ENCODE measurements at regions of chr14 and their contacts with region 1.

Region 1: GRCh38 chr14:104723648-104724406 is at the start of gene ADSS1:
- DNase-seq: no peak
- ATAC-seq: peak; percentile 81
- H3K4me3 ChIP-seq: peak within 1 kb of the TSS; percentile 94
- H3K27ac ChIP-seq: peak within 1 kb of the TSS; percentile 27; the same call in 1 of the 2 replicates
- H3K4me1 ChIP-seq: peaks cover 23% of the 10 kb centered on the region
- H3K27me3 ChIP-seq: no peaks in the 10 kb centered on the region; the same call in 1 of the 2 replicates
- CTCF ChIP-seq: peak; percentile 64
- POLR2A ChIP-seq: no peak
- RAD21 ChIP-seq: peak; percentile 24; the same call in 1 of the 2 replicates
- total RNA-seq, gene ADSS1: 1.8 and 2.5 TPM in 2 replicates

Region 2: DNA sequence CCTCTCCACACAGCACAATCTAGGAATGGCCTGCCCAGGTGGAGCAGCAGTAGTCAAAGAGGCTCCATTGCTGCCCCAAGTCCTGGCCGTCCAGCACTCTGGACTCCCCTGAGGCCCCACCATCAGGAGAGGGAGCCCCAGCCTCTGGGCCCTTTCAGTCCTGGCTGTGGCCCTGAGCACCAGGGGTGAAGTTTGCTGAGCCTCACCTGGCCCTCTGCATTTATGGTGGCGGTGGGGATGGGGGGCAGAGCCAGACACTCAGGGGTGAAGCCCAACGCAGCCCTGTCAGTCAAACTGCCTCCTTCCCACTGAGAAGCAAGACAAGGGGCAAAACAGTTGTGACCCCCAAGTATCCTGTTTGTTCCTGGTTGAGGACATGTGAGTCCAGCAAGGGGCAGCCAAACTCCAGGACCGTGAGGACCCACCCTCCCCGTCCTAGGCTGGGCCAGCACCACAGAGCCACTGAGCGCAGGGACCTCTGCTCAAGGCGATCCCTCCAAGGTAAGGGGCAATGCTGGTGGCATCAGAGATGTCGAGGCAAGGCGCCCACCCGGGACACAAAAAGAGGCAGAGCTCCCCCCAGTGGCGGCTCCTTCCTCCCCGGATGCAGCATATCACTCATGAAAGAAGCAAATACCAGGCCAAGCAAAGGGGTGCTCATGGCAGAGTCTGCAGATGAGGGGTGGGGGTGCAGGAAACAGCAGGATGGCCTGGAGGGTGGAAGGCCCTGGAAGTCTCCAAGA is 1806.2 kb before region 1 on chr14:
- CTCF ChIA-PET with region 1: no interaction called
- POLR2A ChIA-PET with region 1: no interaction called
- dilution Hi-C with region 1: no loop called
- in situ Hi-C with region 1: no loop called
- intact Hi-C with region 1: no loop called
- DNase-seq: peak; percentile 24
- ATAC-seq: peak; percentile 74
- H3K4me3 ChIP-seq: no peak overlapping the region
- H3K27ac ChIP-seq: no peak overlapping the region
- H3K4me1 ChIP-seq: no peaks in the 10 kb centered on the region
- H3K27me3 ChIP-seq: peaks cover 9% of the 10 kb centered on the region
- CTCF ChIP-seq: peak; percentile 72
- POLR2A ChIP-seq: no peak
- RAD21 ChIP-seq: peak; percentile 74

Region 3: DNA sequence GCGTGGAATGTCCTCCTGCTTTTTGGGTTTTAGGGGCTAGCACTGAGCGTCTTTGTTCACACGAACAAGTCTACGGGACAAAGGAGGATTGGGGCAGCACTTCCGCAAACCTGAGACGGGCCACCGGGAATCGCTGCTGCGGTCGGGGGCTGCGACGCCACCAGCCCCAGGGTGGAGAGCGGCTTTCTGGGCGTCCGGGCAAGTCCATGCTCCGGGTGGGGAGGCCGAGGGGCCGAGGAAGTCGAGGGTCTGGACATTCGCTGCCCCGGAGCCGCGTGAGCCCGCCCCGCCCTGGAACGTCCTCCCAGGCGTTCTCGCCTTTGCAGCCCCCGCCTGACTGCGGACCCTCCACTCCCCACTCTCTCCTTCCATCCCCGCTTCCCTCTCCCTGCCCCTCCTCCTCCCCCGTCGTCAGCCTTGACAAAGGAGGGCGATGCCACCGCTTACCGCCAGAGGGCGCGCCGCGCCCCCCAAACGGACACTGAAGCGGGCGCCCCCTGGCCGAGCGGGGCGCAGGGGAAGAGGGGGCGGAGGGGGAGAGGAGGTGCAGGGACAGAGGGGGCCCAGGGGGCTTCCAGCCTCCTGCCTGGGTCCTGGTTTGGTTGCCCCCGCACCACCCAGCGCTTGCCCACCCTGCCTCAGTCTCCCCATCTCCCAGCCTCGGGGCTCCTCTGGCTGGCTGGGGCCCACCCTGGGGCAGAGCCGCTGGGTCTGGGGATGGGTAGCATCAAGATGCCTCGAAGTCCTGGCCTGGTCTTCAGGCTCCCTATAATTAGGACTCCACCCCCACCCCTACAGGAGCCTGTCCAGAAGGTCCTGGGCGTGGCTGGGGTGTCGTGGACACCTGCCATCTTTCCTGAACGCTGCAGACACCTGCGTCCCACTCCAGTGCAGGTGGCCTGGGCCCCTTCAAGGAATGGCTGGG is 73.5 kb before region 1 on chr14:
- CTCF ChIA-PET with region 1: no interaction called
- POLR2A ChIA-PET with region 1: no interaction called
- dilution Hi-C with region 1: no loop called
- in situ Hi-C with region 1: no loop called
- intact Hi-C with region 1: loop called (anchors 5 kb)
- DNase-seq: peak; percentile 31
- ATAC-seq: peak; percentile 99
- H3K4me3 ChIP-seq: peak overlapping the region; percentile 41
- H3K27ac ChIP-seq: peak overlapping the region; percentile 1; the same call in 1 of the 2 replicates
- H3K4me1 ChIP-seq: 0 out of 2 replicates have a peak, but pooled peaks cover 2% of the 10 kb centered on the region
- H3K27me3 ChIP-seq: peaks cover 9% of the 10 kb centered on the region
- CTCF ChIP-seq: peak; percentile 98
- POLR2A ChIP-seq: no peak
- RAD21 ChIP-seq: peak; percentile 87

Region 4: DNA sequence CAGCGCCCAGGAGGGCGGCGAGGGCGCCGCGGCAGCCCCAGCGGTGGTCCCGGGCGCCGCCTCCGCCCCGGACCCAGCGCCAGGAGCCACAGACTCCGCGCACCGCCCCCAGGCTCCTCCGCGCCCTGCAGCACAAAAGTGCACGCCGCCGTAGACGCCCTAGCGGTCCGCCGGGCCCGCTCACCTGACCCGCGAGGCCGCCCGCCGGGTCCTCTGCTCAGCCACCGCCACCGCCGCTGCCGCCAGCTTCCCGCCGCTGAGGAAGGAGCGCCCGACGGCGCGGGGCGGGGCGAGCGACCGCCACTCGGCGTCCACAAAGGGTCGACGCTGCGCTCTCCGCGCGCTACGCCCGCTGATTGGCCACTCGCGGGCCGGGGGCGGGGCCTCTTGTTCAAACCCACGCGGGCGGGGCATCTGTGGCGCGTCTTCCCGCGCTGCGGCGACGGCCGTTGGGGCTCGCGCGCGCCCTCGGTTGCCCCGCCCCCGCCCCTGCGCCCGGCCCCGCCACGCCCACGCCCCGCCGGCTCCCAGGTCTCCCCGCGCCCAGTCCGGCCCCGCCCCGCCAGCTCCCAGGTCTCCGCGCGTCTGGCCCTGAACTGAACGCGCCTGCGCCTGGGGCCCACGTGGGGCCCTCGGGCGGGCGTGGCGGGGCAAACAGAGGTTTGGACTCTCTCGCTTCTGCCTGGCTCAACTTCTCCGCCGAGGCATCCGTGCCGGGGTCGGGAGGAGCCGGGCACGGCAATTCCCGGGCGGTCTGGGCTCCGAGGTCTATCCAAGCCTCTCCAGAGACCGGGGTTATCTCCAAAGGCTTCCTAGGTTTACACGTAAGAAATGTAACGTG is 297.2 kb after region 1 on chr14 and contains the start of gene CDCA4:
- CTCF ChIA-PET with region 1: no interaction called
- POLR2A ChIA-PET with region 1: no interaction called
- dilution Hi-C with region 1: no loop called
- in situ Hi-C with region 1: no loop called
- intact Hi-C with region 1: no loop called
- DNase-seq: peak; percentile 93
- ATAC-seq: peak; percentile 91
- H3K4me3 ChIP-seq: peak within 1 kb of the TSS; percentile 91
- H3K27ac ChIP-seq: peak within 1 kb of the TSS; percentile 89
- H3K4me1 ChIP-seq: peaks cover 15% of the 10 kb centered on the region
- H3K27me3 ChIP-seq: no peaks in the 10 kb centered on the region
- CTCF ChIP-seq: no peak
- POLR2A ChIP-seq: peak; percentile 84
- RAD21 ChIP-seq: no peak
- total RNA-seq, gene CDCA4: 17.7 and 19.7 TPM in 2 replicates